Left cardiac atrium (tissue), 4 donors: ENCODE measurements at regions of chr13 and their contacts with region 1.

Region 1: DNA sequence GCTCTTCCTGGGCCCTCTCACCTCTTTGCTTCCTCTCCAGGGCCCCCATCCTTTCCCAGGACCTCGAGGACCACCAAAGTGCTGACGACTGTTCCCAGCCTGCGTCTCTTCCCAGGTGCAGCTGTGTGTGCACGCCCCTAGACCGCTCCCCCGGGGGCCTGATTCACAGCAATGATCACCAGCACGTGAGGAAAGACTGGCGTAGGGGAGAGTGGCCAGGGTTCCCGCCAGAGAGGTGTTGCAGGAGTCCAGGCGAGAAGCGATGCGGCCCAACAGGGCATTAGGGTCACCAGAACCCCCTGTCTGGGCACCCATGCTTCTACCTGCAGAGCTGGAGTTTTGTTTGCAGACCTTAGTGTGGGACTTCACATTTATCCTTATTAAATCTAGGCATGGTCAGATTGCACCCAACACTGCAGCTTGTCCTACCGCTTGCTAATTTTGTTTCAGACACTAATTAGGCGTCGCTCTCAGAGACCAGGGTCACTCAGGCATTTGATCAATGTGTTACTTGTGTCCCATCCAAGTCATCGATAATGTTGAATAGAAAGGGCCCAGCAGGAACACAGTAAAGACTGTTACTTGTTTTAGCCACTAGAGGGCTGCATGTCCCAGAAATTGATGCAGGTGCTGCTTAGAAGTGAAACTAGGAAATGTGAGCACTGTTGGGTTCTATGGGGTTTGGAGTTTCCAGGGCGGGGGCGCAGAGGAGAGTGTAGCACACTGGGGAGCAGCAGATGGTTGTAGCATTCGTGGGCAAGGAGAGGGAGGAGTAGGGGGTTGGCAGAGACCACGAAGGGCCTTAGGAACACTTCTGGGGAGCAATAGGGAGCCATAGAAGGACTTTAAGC is 53.2 kb downstream of the CDADC1 start:
- DNase-seq: peak; percentile 43
- ATAC-seq: peak; percentile 73 to 85

Region 2: GRCh38 chr13:49436890-49437289 is 135.9 kb after region 1 on chr13:
- intact Hi-C with region 1: loop called (anchors 2 to 5 kb)
- DNase-seq: peak; percentile 48
- ATAC-seq: peak; percentile 78 to 86

Region 3: GRCh38 chr13:49606747-49607648 is 306.0 kb after region 1 on chr13:
- intact Hi-C with region 1: loop called (anchors 2 to 5 kb)
- DNase-seq: peak; percentile 87
- ATAC-seq: peak; percentile 98 to 99

Region 4: DNA sequence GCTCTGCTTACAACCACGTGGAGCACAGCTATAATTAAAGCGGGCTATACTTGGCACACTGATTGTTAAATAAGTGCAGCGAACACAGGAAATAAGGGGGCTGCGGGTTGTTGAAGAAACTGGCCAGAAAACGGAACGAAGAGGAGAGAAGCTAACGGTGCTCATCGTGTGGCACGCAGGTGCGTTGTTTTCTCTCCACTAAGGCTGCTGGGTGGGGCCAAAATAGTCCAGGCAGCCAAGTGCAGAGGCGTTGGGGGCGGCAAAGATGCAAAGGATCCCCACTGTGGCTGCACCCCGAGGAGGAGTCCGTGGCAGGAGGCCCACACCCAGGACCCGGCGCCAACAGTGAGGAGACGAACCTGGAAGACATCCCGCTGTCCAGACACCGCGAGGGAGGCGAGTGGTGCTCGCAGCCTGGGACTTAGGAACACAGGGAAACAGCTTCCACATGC is 319.2 kb after region 1 on chr13:
- intact Hi-C with region 1: no loop called
- DNase-seq: no peak
- ATAC-seq: peak in 1 of 2 donors; percentile 11